Posterior vena cava (tissue), 2 donors: ENCODE measurements at regions of chr1 and their contacts with region 1.

Region 1: GRCh38 chr1:234499119-234499942 is 20.4 kb upstream of the TARBP1 start:
- DNase-seq: peak; percentile 98

Region 2: GRCh38 chr1:234212764-234213657 is 286.3 kb before region 1 on chr1:
- intact Hi-C with region 1: no loop called
- DNase-seq: no peak

Region 3: GRCh38 chr1:234393190-234393589 is 106.1 kb before region 1 on chr1:
- intact Hi-C with region 1: no loop called
- DNase-seq: no peak

Region 4: GRCh38 chr1:234599617-234600417 is 100.5 kb after region 1 on chr1:
- intact Hi-C with region 1: loop called (anchors 5 to 10 kb)
- DNase-seq: peak; percentile 96

Region 5: GRCh38 chr1:234610348-234611152 is 111.2 kb after region 1 on chr1:
- intact Hi-C with region 1: loop called in 1 of 2 experiments (anchors 5 kb)
- DNase-seq: peak; percentile 99

Region 6: GRCh38 chr1:234722904-234723720 is 223.8 kb after region 1 on chr1:
- intact Hi-C with region 1: loop called in 1 of 2 experiments (anchors 5 kb)
- DNase-seq: peak; percentile 91

Region 7: DNA sequence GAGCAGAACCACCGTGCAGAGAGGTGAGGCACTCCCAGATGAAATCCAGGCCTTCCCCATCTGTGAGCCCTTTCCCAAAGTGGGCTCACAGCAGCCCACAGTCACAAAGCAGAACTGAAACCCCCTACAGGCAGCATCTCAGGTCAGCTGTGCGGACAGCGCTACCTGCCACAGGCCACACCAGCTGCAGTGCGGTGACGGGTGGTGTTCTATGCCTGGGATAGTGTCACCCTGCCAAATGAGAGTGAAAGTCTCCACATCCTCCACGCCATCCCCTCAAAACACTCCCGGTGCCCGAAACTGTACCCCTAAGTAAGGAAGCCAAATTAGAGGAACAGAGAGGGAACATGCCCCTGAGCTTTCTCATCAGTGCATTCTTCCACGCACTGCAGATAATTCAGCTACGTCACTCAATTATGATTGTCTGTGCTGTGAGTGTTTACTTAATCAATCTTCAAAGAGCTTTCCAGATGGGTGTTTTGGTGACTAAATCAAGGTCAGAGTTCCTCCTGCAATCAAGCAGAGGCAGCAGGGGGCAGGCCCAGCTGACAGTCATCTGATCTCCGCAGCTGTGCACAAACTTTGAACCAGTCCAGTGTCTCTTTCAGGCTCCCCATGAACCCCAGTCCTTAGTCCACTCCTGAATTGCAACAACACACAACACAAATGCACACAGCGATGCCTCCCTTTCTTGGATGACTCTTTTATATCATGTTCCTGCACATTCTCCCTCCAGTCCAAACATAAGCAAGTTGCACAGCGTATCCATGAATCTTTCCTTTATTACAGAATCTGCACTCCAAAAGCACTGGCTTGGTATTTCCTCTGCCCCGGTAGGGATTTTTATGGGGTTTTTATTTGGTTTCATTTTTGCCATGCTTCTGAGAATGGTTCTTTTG is 479.3 kb after region 1 on chr1:
- intact Hi-C with region 1: loop called in 1 of 2 experiments (anchors 10 kb)
- DNase-seq: peak; percentile 86

Region 8: GRCh38 chr1:235075188-235075926 is 576.0 kb after region 1 on chr1:
- intact Hi-C with region 1: loop called in 1 of 2 experiments (anchors 5 kb)
- DNase-seq: peak; percentile 84

Region 9: DNA sequence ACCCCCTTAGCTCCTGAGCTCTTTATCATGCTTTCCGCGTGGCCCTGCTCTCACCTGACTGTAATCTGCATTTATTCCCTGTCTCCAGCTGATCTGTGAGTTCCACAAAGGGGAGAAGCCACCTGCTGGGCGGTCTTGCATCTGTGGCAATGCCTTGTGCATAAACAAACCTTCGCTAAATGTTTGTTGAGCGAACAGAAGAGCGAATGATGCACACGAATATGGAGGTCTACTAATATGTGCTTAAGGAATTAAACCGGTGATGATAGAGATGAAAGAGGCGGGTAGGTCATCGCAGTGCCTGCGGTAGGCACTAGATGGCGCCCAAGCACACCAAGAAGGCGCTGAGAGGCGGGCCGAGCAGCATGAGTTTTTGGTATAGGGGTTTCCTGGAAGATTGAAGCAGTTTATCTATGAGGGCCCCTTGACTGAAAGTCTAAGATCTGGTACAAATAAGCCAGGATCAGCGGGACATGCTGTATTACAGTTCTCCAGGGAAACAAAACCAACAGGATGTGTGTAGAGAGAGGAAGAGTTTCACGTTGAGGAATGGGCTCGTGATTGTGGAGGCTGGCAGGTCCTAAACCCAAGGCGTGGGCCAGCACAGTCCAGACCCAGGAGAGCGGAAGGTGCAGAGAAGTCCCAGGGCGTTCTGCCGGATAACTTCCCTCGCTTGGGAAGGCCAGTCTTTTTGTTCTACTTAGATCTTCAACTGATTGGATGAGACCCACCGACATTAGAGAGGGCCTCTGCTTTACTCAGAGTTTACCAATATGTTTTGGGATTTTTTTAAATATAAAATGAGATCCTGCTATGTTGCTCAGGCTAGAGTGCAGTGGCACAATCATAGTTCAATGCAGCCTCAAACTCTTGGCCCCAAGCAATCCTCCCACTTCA is 594.6 kb after region 1 on chr1:
- intact Hi-C with region 1: loop called in 1 of 2 experiments (anchors 5 kb)
- DNase-seq: peak; percentile 93